CD4-positive, alpha-beta T cell (primary cell): ENCODE measurements at regions of chr10 and their contacts with region 1.

Region 1: GRCh38 chr10:12656518-12657142 is 307.3 kb downstream of the CAMK1D start:
- DNase-seq: peak in 4 of 14 experiments; percentile 10 to 71 (median 70)
- ATAC-seq: peak; percentile 86
- H3K4me3 ChIP-seq: no peak overlapping the region
- H3K4me3 Mint-ChIP-seq: peak overlapping the region; percentile 23
- H3K27ac ChIP-seq: no peak overlapping the region
- H3K27ac Mint-ChIP-seq: no peak overlapping the region
- H3K4me1 ChIP-seq: peaks cover 4% of the 10 kb centered on the region
- H3K4me1 Mint-ChIP-seq: peaks cover 8% of the 10 kb centered on the region
- H3K27me3 ChIP-seq: no peaks in the 10 kb centered on the region
- H3K27me3 Mint-ChIP-seq: no peaks in the 10 kb centered on the region
- CTCF ChIP-seq: peak; percentile 75

Region 2: GRCh38 chr10:12710594-12711349 is 54.1 kb after region 1 on chr10:
- CTCF ChIA-PET with region 1: interaction called, 4 read pairs
- POLR2A ChIA-PET with region 1: no interaction called
- intact Hi-C with region 1: loop called (anchors 1 to 2 kb)
- DNase-seq: peak; percentile 50 to 83 (median 68)
- ATAC-seq: peak; percentile 92
- H3K4me3 ChIP-seq: no peak overlapping the region
- H3K4me3 Mint-ChIP-seq: no peak overlapping the region
- H3K27ac ChIP-seq: no peak overlapping the region
- H3K27ac Mint-ChIP-seq: no peak overlapping the region
- H3K4me1 ChIP-seq: no peaks in the 10 kb centered on the region
- H3K4me1 Mint-ChIP-seq: peaks cover 14% of the 10 kb centered on the region
- H3K27me3 ChIP-seq: no peaks in the 10 kb centered on the region
- H3K27me3 Mint-ChIP-seq: no peaks in the 10 kb centered on the region
- CTCF ChIP-seq: peak; percentile 96